ENCODE measurements at regions of chr1 and their contacts with region 1.

Region 1: DNA sequence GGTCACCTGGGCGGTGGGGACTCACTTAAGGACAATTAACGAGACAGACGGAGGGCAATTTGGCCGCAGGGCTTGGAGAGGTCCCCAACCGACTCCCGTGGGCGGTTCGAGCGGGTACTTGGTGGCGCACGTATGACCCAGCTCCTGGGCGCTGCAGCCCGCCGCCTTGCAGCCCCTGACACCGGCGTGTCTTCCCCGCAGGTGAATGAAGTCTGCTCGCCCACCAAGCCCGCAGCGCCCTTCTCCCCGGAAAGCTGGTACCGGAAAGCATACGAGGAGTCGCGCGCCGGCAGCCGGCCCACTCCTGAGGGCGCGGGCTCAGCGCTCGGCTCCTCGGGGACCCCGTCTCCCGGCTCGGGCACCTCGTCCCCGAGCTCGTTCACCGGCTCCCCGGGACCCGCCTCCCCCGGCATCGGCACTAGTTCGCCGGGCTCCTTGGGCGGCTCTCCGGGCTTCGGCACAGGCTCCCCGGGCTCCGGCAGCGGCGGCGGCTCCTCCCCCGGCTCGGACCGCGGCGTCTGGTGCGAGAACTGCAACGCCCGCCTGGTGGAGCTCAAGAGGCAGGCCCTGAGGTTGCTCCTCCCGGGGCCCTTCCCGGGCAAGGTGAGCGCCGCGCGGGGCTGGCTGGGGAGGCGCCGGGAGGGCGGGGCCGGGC is 1.4 kb downstream of the KIF26B start:
- DNase-seq: peak; percentile 67 to 95
- H3K4me3 ChIP-seq: peak overlapping the region; percentile 47; the same call in 1 of the 2 replicates
- H3K27ac ChIP-seq: no peak overlapping the region
- H3K4me1 ChIP-seq: peaks cover 23% of the 10 kb centered on the region
- H3K27me3 ChIP-seq: peaks cover 96% of the 10 kb centered on the region
- CTCF ChIP-seq: peak; percentile 75

Region 2: GRCh38 chr1:244896550-244896949 is 259.7 kb before region 1 on chr1:
- CTCF ChIA-PET with region 1: no interaction called
- POLR2A ChIA-PET with region 1: no interaction called
- intact Hi-C with region 1: no loop called
- DNase-seq: no peak
- H3K4me3 ChIP-seq: no peak overlapping the region
- H3K27ac ChIP-seq: no peak overlapping the region
- H3K4me1 ChIP-seq: no peaks in the 10 kb centered on the region
- H3K27me3 ChIP-seq: no peaks in the 10 kb centered on the region
- CTCF ChIP-seq: no peak

Region 3: GRCh38 chr1:244970661-244971551 is 185.3 kb before region 1 on chr1:
- CTCF ChIA-PET with region 1: no interaction called
- POLR2A ChIA-PET with region 1: no interaction called
- intact Hi-C with region 1: no loop called
- DNase-seq: peak; percentile 80 to 93
- H3K4me3 ChIP-seq: peak overlapping the region; percentile 65
- H3K27ac ChIP-seq: peak overlapping the region; percentile 97
- H3K4me1 ChIP-seq: peaks cover 25% of the 10 kb centered on the region
- H3K27me3 ChIP-seq: no peaks in the 10 kb centered on the region
- CTCF ChIP-seq: peak; percentile 65; the same call in 1 of the 2 replicates

Region 4: DNA sequence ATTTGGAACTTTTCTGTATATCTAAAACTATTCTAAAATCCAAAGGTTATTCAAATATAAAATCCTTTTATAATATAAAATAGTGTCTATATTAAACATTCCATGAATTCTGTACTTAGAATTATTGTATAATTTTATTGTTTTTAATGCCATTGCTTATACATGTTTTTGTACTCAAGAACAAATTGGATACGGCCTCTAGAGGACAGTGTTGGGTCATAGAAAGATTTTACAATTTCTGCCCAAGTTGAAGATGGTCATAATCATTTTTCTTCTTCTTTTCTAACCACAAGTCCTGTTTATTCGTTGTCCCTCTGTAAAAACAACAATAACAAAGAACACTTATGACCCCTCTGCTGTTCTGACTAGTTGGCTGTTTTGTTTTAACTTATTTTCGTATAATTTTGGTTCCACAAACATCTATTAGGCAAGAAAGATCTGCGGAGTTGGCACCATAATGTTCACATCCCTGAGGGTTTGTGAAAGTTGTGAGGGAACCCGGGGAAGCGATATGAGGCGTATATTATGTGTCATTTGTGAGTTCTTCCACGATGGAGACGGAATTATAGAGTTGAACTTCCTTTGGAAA is 77.1 kb before region 1 on chr1:
- CTCF ChIA-PET with region 1: no interaction called
- POLR2A ChIA-PET with region 1: no interaction called
- intact Hi-C with region 1: loop called (anchors 1 kb)
- DNase-seq: peak in 1 of 2 experiments; percentile 44
- H3K4me3 ChIP-seq: no peak overlapping the region
- H3K27ac ChIP-seq: no peak overlapping the region
- H3K4me1 ChIP-seq: no peaks in the 10 kb centered on the region
- H3K27me3 ChIP-seq: peaks cover 16% of the 10 kb centered on the region; the same call in 1 of the 2 replicates
- CTCF ChIP-seq: peak; percentile 87

Region 5: GRCh38 chr1:245133995-245134720 is 22.1 kb before region 1 on chr1:
- CTCF ChIA-PET with region 1: no interaction called
- POLR2A ChIA-PET with region 1: no interaction called
- intact Hi-C with region 1: no loop called
- DNase-seq: no peak
- H3K4me3 ChIP-seq: no peak overlapping the region
- H3K27ac ChIP-seq: no peak overlapping the region
- H3K4me1 ChIP-seq: no peaks in the 10 kb centered on the region
- H3K27me3 ChIP-seq: peaks cover 94% of the 10 kb centered on the region
- CTCF ChIP-seq: no peak

Region 6: DNA sequence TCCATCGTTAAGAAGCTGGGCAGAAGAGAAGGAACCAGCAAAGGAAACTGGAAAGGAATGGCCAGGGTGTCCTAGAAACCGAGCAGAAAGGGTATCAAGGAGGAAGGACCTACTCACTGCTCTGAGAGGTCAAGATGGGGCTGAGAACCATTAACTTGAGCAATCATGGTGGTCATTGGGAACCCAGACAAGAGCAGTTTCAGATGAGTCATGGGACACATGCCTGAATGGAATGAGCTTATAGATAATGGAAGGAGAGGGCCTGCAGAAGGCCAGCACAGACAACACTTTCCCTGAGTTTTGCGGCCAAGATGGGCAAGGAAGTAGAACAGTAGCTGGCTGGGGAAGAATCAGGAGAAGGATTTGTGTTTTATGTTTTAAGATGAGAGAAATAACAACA is 381.8 kb after region 1 on chr1:
- CTCF ChIA-PET with region 1: no interaction called
- POLR2A ChIA-PET with region 1: no interaction called
- intact Hi-C with region 1: no loop called
- DNase-seq: no peak
- H3K4me3 ChIP-seq: no peak overlapping the region
- H3K27ac ChIP-seq: no peak overlapping the region
- H3K4me1 ChIP-seq: no peaks in the 10 kb centered on the region
- H3K27me3 ChIP-seq: peaks cover 83% of the 10 kb centered on the region
- CTCF ChIP-seq: no peak

Region 7: GRCh38 chr1:246280551-246280950 is 1124.3 kb after region 1 on chr1:
- CTCF ChIA-PET with region 1: interaction called, 3 read pairs
- POLR2A ChIA-PET with region 1: no interaction called
- intact Hi-C with region 1: loop called (anchors 1 kb)
- DNase-seq: no peak
- H3K4me3 ChIP-seq: no peak overlapping the region
- H3K27ac ChIP-seq: no peak overlapping the region
- H3K4me1 ChIP-seq: no peaks in the 10 kb centered on the region
- H3K27me3 ChIP-seq: no peaks in the 10 kb centered on the region
- CTCF ChIP-seq: 0 out of 2 replicates have a peak, but pooled peaks have one; percentile 34

Region 8: DNA sequence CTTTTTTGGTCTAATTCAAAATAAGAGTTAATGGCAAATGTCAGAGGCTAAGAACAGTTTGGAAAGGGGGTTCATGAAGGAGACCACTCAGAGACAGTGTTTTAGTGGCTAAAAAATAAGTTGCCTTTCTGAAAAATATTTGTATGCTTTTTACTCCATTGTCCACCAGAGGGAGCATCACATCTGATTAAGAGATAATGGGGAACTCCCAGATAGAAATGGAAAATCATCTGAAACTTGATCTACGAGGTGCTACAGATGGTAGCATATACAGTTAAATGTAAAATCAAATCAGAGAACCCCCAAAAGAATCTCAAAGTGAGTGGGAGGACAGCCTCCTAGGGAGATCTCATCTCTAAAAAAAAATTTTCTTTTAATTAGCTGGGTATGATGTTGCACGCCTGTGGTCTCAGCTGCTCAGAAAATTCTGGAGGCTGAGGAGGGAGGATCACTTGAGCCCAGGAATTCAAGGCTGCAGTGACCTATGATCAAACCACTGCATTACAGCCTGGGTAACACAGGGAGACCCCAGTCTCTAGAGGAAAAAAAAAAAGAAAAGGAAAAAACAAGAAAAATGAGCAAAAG is 1341.2 kb after region 1 on chr1:
- CTCF ChIA-PET with region 1: interaction called, 5 read pairs
- POLR2A ChIA-PET with region 1: no interaction called
- intact Hi-C with region 1: loop called (anchors 2 kb)
- DNase-seq: peak in 1 of 2 experiments; percentile 53
- H3K4me3 ChIP-seq: no peak overlapping the region
- H3K27ac ChIP-seq: no peak overlapping the region
- H3K4me1 ChIP-seq: peaks cover 3% of the 10 kb centered on the region
- H3K27me3 ChIP-seq: no peaks in the 10 kb centered on the region
- CTCF ChIP-seq: peak; percentile 82